ENCODE measurements at regions of chr1 and their contacts with region 1.

Region 1: GRCh38 chr1:206612129-206612876 is at the start of gene EIF2D:
- DNase-seq: peak; percentile 100
- H3K4me3 ChIP-seq: peak within 1 kb of the TSS; percentile 81 to 94
- H3K27ac ChIP-seq: peak within 1 kb of the TSS; percentile 83 to 90
- H3K4me1 ChIP-seq: peaks cover 0 to 8% of the 10 kb centered on the region in 2 experiments; a peak in 2 of 4 replicates
- H3K27me3 ChIP-seq: no peaks in the 10 kb centered on the region
- CTCF ChIP-seq: peak; percentile 77
- EP300 ChIP-seq: peak in 1 of 2 experiments; percentile 44; a peak in 1 of 4 replicates
- RAD21 ChIP-seq: no peak
- polyA plus RNA-seq, gene EIF2D: 59.5 and 83.2 TPM in 2 replicates

Region 2: DNA sequence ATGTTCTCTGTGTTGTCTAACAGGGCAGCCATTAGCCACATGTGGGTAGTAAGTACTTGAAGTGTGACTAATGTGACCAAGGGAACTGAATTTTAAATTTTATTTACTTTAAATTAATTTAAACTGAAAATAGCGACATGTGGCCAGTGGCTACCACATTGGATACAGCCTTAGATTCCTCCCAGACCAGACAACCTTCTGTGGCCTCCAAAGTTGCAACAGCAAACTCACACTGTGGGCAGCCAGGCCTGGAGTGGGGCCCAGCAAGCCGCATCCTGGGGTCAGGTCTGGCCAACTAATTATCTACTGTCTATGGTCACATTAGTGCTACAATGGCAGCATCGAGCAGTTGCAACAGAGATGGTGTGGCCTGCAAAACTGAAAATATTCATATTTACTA is 11.8 kb before region 1 on chr1:
- CTCF ChIA-PET with region 1: interaction called, 24 read pairs
- POLR2A ChIA-PET with region 1: no interaction called
- DNase-seq: no peak
- H3K4me3 ChIP-seq: no peak overlapping the region
- H3K27ac ChIP-seq: no peak overlapping the region
- H3K4me1 ChIP-seq: no peaks in the 10 kb centered on the region
- H3K27me3 ChIP-seq: no peaks in the 10 kb centered on the region
- CTCF ChIP-seq: no peak
- EP300 ChIP-seq: no peak
- RAD21 ChIP-seq: no peak

Region 3: GRCh38 chr1:206628916-206629315 is 16.6 kb after region 1 on chr1:
- CTCF ChIA-PET with region 1: interaction called, 21 read pairs
- POLR2A ChIA-PET with region 1: interaction called, 7 read pairs
- DNase-seq: no peak
- H3K4me3 ChIP-seq: no peak overlapping the region
- H3K27ac ChIP-seq: no peak overlapping the region
- H3K4me1 ChIP-seq: peaks cover 0 to 4% of the 10 kb centered on the region in 2 experiments; a peak in 2 of 4 replicates
- H3K27me3 ChIP-seq: peaks cover 4% of the 10 kb centered on the region; the same call in 1 of the 2 replicates
- CTCF ChIP-seq: no peak
- EP300 ChIP-seq: no peak
- RAD21 ChIP-seq: no peak

Region 4: GRCh38 chr1:206635080-206635977 is 23.0 kb after region 1 on chr1 and contains the start of gene DYRK3:
- CTCF ChIA-PET with region 1: interaction called, 15 read pairs
- POLR2A ChIA-PET with region 1: interaction called, 12 read pairs
- DNase-seq: peak; percentile 97
- H3K4me3 ChIP-seq: peak within 1 kb of the TSS; percentile 87 to 92
- H3K27ac ChIP-seq: peak within 1 kb of the TSS; percentile 79 to 83
- H3K4me1 ChIP-seq: peaks cover 18 to 22% of the 10 kb centered on the region in 2 experiments; a peak in 3 of 4 replicates
- H3K27me3 ChIP-seq: no peaks in the 10 kb centered on the region
- CTCF ChIP-seq: no peak
- EP300 ChIP-seq: no peak; a peak in 1 of 4 replicates
- RAD21 ChIP-seq: no peak
- polyA plus RNA-seq, gene DYRK3: 3.6 and 5.8 TPM in 2 replicates

Region 5: DNA sequence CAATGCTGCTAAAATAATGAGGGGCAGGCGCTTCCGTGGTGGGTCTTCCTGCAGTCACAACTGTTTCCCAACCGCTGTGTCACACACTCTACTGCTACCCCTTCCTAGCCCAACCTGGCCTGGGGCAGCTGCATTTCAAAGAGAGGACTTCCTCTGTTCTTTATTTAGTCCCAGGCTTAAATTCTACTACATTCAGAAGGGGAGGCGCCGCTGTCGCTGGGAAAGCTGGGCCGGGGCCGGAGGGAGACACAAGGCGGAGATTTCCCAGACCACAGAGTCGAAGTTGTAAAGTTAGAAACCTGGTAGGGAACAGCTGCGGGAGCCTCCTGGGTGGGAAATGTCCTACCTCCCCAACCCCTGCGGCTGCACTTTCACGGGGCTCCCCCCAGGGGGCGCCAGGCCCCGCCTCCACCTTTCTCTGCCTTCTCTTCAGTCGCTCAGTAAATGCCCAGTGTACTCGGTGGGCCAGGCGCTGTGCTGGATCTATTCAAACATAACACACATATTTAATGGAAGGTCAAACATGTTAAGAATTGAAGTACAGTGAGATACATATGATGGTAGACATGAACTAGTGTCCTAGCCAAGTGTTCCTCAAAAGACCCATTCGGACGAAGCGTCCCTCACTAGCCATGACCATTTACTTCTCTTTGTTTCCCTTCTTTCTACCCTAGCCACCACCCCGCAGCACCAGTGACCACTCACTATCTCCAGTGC is 46.1 kb after region 1 on chr1:
- CTCF ChIA-PET with region 1: interaction called, 109 read pairs
- POLR2A ChIA-PET with region 1: no interaction called
- DNase-seq: peak; percentile 70
- H3K4me3 ChIP-seq: no peak overlapping the region; a peak in 1 of 4 replicates
- H3K27ac ChIP-seq: no peak overlapping the region
- H3K4me1 ChIP-seq: peaks cover 0 to 11% of the 10 kb centered on the region in 2 experiments; a peak in 1 of 4 replicates
- H3K27me3 ChIP-seq: peaks cover 12% of the 10 kb centered on the region; the same call in 1 of the 2 replicates
- CTCF ChIP-seq: peak; percentile 61
- EP300 ChIP-seq: no peak
- RAD21 ChIP-seq: no peak

Region 6: GRCh38 chr1:206839857-206840256 is 227.6 kb after region 1 on chr1:
- CTCF ChIA-PET with region 1: no interaction called
- POLR2A ChIA-PET with region 1: no interaction called
- DNase-seq: no peak
- H3K4me3 ChIP-seq: no peak overlapping the region
- H3K27ac ChIP-seq: no peak overlapping the region
- H3K4me1 ChIP-seq: peaks cover 0 to 4% of the 10 kb centered on the region in 2 experiments; a peak in 1 of 4 replicates
- H3K27me3 ChIP-seq: no peaks in the 10 kb centered on the region
- CTCF ChIP-seq: no peak
- EP300 ChIP-seq: no peak
- RAD21 ChIP-seq: no peak

Measured in SK-N-SH (cell line).